ENCODE measurements at regions of chr14 and their contacts with region 1.

Region 1: GRCh38 chr14:55921511-55921910 is 196.7 kb upstream of the PELI2 start:
- DNase-seq: no peak
- ATAC-seq: peak in 1 of 4 donors; percentile 28
- H3K4me3 ChIP-seq: no peak overlapping the region
- H3K27ac ChIP-seq: no peak overlapping the region
- H3K4me1 ChIP-seq: no peaks in the 10 kb centered on the region
- H3K27me3 ChIP-seq: no peaks in the 10 kb centered on the region
- CTCF ChIP-seq: no peak

Region 2: GRCh38 chr14:54796961-54797360 is 1124.5 kb before region 1 on chr14:
- intact Hi-C with region 1: no loop called
- DNase-seq: no peak
- ATAC-seq: no peak
- H3K4me3 ChIP-seq: no peak overlapping the region
- H3K27ac ChIP-seq: no peak overlapping the region
- H3K4me1 ChIP-seq: no peaks in the 10 kb centered on the region
- H3K27me3 ChIP-seq: no peaks in the 10 kb centered on the region
- CTCF ChIP-seq: no peak

Region 3: GRCh38 chr14:54922598-54922997 is 998.9 kb before region 1 on chr14:
- intact Hi-C with region 1: loop called in 1 of 2 experiments (anchors 5 kb)
- DNase-seq: no peak
- ATAC-seq: no peak
- H3K4me3 ChIP-seq: no peak overlapping the region
- H3K27ac ChIP-seq: no peak overlapping the region
- H3K4me1 ChIP-seq: no peaks in the 10 kb centered on the region
- H3K27me3 ChIP-seq: no peaks in the 10 kb centered on the region
- CTCF ChIP-seq: no peak

Region 4: DNA sequence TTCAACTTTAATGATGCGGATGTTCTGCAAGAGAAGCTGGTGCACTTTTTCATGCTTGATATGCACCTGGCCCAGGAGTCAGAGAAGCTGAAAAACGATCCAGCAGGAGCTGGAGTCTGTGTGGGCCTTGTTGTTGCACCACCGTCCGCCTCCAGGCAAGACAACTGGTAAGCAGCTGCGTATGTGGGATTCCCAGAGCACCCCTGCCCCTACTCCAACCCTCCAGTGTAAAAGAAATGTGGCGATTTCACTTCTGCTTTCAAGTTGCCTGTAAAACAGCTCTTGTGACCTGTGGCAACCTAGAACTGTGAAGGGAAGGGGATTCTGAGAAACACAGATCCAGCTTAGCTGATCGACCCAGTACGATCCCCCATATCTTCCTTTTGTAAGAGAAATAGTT is 42.6 kb after region 1 on chr14:
- intact Hi-C with region 1: no loop called
- DNase-seq: no peak
- ATAC-seq: no peak
- H3K4me3 ChIP-seq: no peak overlapping the region
- H3K27ac ChIP-seq: no peak overlapping the region
- H3K4me1 ChIP-seq: no peaks in the 10 kb centered on the region
- H3K27me3 ChIP-seq: no peaks in the 10 kb centered on the region
- CTCF ChIP-seq: no peak

Region 5: DNA sequence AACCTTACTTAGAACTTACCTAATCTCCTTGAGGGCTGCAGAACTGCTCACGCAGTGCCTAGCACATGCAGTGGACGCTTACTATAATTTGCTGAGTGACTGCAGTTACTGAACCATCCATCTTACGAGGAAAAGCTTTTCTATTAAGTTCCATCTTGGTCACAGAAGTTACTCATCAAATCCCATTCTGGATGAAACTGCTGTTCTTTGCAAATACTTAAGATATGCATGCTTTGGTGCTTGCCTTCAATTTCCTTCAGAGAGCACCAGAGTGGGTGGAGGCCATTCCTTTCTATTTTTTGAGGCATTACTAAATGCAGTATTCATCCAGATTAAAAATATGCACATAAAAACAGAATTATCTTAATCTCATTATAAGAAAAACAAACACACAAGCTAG is 179.0 kb after region 1 on chr14:
- intact Hi-C with region 1: no loop called
- DNase-seq: no peak
- ATAC-seq: no peak
- H3K4me3 ChIP-seq: no peak overlapping the region
- H3K27ac ChIP-seq: no peak overlapping the region
- H3K4me1 ChIP-seq: no peaks in the 10 kb centered on the region
- H3K27me3 ChIP-seq: peaks cover 0 to 4% (median 0%) of the 10 kb centered on the region in 3 donors
- CTCF ChIP-seq: no peak

Measured in psoas muscle (tissue), 8 donors.